Caco-2 (cell line): ENCODE measurements at regions of chr12 and their contacts with region 1.

Region 1: GRCh38 chr12:55789171-55789570 is 28.4 kb downstream of the SARNP start:
- DNase-seq: peak; percentile 47 to 67
- H3K4me3 ChIP-seq: no peak overlapping the region
- H3K4me3 Mint-ChIP-seq: no peak overlapping the region
- H3K27ac Mint-ChIP-seq: no peak overlapping the region
- H3K4me1 ChIP-seq: 0 out of 2 replicates have a peak, but pooled peaks cover 3% of the 10 kb centered on the region
- H3K4me1 Mint-ChIP-seq: peaks cover 13% of the 10 kb centered on the region
- H3K27me3 ChIP-seq: no peaks in the 10 kb centered on the region
- H3K27me3 Mint-ChIP-seq: no peaks in the 10 kb centered on the region
- CTCF ChIP-seq: no peak

Region 2: DNA sequence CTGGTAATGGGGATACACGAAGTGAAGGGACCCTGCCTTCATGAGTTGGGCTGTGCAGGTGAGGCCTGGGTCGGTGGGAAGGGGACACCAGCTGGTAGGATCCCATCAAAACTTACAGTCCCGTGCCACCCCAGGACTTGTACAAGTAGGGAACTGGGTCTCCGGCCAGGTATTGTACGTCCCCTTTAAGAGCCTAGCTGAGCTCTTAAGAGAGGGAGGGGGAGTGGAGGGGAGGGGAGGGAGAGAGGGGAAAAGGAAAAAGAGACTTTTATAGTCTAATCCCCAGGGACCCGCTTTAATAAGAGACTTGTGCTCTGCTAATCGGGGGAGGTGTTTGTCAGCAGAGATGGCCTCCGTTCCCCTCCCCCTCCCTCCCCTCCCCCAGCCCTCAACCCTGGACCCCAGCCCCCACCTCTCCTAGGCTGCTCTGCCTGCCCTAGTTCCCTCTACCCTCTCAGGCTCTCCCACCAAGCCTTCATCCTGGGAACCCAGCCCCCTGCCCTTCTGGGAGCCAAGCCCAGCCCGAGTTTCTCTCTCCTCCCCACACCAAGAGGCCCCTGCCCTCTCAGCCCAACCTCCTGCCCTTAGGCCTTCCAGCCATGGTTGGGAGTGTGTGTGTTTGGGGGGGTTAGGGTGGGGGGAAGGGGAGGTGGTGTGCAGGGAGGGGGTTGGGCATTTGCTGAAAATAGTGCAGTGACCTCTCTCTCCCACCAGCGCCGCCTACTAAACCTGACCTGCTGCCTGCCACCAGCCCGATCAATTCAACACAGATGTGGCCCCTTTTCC is 43.6 kb before region 1 on chr12:
- CTCF ChIA-PET with region 1: no interaction called
- POLR2A ChIA-PET with region 1: no interaction called
- intact Hi-C with region 1: loop called (anchors 2 kb)
- DNase-seq: no peak
- H3K4me3 ChIP-seq: no peak overlapping the region
- H3K4me3 Mint-ChIP-seq: peak overlapping the region; percentile 80
- H3K27ac Mint-ChIP-seq: peak overlapping the region; percentile 33
- H3K4me1 ChIP-seq: peaks cover 14% of the 10 kb centered on the region
- H3K4me1 Mint-ChIP-seq: peaks cover 21% of the 10 kb centered on the region
- H3K27me3 ChIP-seq: no peaks in the 10 kb centered on the region
- H3K27me3 Mint-ChIP-seq: no peaks in the 10 kb centered on the region
- CTCF ChIP-seq: no peak

Region 3: DNA sequence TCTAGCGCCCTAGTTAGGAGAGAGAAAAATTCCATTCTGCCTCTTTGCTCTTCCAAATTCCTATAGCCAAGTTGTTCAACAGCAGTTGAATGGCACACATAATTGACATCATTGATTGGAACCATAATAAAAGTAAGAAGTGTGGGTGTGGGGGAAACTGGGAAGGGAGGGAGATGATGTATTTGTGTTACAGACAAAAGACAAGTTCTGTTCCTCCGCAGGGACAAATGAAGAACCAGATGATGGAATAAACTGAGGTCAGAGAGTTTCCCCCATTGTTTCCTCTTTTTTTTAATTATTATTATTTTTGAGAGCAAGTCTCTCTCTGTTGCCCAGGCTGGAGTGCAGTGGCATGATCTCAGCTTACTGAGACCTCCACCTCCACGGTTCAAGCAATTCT is 11.3 kb before region 1 on chr12:
- CTCF ChIA-PET with region 1: no interaction called
- POLR2A ChIA-PET with region 1: no interaction called
- intact Hi-C with region 1: loop called (anchors 1 kb)
- DNase-seq: no peak
- H3K4me3 ChIP-seq: no peak overlapping the region
- H3K4me3 Mint-ChIP-seq: no peak overlapping the region
- H3K27ac Mint-ChIP-seq: peak overlapping the region; percentile 50
- H3K4me1 ChIP-seq: peaks cover 21% of the 10 kb centered on the region
- H3K4me1 Mint-ChIP-seq: peaks cover 13% of the 10 kb centered on the region
- H3K27me3 ChIP-seq: no peaks in the 10 kb centered on the region
- H3K27me3 Mint-ChIP-seq: no peaks in the 10 kb centered on the region
- CTCF ChIP-seq: no peak

Region 4: DNA sequence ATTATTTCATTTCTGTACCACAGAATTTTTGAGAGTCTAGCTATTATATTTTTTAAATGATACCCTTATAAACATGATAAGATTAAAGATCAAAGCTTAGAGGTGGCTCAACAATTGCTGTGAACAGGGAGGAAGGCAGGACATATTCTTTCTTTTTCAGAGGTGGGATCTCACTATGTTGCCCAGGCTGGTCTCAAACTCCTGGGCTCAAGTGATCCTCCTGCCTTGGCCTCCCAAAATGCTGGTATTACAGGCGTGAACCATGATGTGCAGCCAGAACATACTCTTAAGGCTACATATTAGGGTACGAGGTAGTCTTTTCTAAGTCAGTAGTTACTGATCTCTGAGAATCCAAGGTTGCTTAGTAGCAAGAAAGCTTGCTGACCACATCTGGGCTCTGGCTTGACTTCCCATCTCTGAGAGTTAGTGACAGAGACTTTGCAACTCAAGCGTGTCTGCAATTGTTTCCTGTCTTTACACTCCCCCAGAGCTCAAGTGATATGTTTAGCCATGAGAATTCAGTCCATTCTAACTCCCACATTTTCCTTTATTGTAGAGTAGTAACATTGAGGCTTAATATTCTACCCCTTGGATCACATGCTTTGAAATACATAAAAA is 193.3 kb after region 1 on chr12:
- CTCF ChIA-PET with region 1: no interaction called
- POLR2A ChIA-PET with region 1: no interaction called
- intact Hi-C with region 1: no loop called
- DNase-seq: no peak
- H3K4me3 ChIP-seq: no peak overlapping the region
- H3K4me3 Mint-ChIP-seq: no peak overlapping the region
- H3K27ac Mint-ChIP-seq: no peak overlapping the region
- H3K4me1 ChIP-seq: no peaks in the 10 kb centered on the region
- H3K4me1 Mint-ChIP-seq: no peaks in the 10 kb centered on the region
- H3K27me3 ChIP-seq: no peaks in the 10 kb centered on the region
- H3K27me3 Mint-ChIP-seq: no peaks in the 10 kb centered on the region
- CTCF ChIP-seq: no peak